ENCODE measurements at regions of chr20 and their contacts with region 1.

Region 1: GRCh38 chr20:2237059-2237458 is 58.7 kb upstream of the TGM3 start:
- DNase-seq: peak; percentile 97
- H3K4me3 ChIP-seq: no peak overlapping the region
- H3K27ac ChIP-seq: peak overlapping the region; percentile 49
- H3K4me1 ChIP-seq: peaks cover 14% of the 10 kb centered on the region
- H3K27me3 ChIP-seq: peaks cover 11% of the 10 kb centered on the region
- CTCF ChIP-seq: peak in 1 of 2 donors; percentile 65

Region 2: DNA sequence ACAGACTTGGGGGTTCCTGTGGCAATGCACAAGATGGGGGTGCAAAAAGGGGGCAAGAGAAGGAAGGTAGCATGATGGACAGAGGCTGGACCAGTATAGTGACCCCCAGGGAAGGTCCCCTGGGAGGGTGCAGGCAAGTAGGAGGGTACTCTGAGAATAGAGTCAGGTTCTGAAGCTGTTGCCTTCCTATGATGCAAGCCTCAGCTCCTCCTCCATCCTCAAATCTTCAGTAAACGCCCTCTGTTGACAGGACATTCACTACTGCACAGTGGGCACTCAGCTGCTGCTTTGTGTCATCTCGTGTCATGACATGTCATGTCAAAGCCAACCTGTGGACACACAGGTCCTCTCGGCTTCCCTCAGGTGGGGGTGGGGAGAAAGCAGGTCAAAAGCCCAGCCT is 902.3 kb before region 1 on chr20:
- CTCF ChIA-PET with region 1: interaction called, 20 read pairs
- dilution Hi-C with region 1: no loop called
- in situ Hi-C with region 1: no loop called
- intact Hi-C with region 1: no loop called
- DNase-seq: peak; percentile 50
- H3K4me3 ChIP-seq: no peak overlapping the region
- H3K27ac ChIP-seq: no peak overlapping the region
- H3K4me1 ChIP-seq: peaks cover 28% of the 10 kb centered on the region
- H3K27me3 ChIP-seq: no peaks in the 10 kb centered on the region
- CTCF ChIP-seq: peak in 1 of 2 donors; percentile 34

Region 3: GRCh38 chr20:2261629-2262028 is 24.6 kb after region 1 on chr20:
- CTCF ChIA-PET with region 1: interaction called, 18 read pairs
- dilution Hi-C with region 1: no loop called
- in situ Hi-C with region 1: no loop called
- intact Hi-C with region 1: no loop called
- DNase-seq: no peak
- H3K4me3 ChIP-seq: no peak overlapping the region
- H3K27ac ChIP-seq: no peak overlapping the region
- H3K4me1 ChIP-seq: no peaks in the 10 kb centered on the region
- H3K27me3 ChIP-seq: no peaks in the 10 kb centered on the region
- CTCF ChIP-seq: no peak

Region 4: GRCh38 chr20:2283706-2284423 is 46.8 kb after region 1 on chr20:
- CTCF ChIA-PET with region 1: no interaction called
- dilution Hi-C with region 1: no loop called
- in situ Hi-C with region 1: no loop called
- intact Hi-C with region 1: loop called (anchors 5 kb)
- DNase-seq: peak; percentile 77
- H3K4me3 ChIP-seq: no peak overlapping the region
- H3K27ac ChIP-seq: no peak overlapping the region
- H3K4me1 ChIP-seq: peaks cover 19% of the 10 kb centered on the region
- H3K27me3 ChIP-seq: peaks cover 2% of the 10 kb centered on the region
- CTCF ChIP-seq: no peak

Region 5: GRCh38 chr20:2822073-2822472 is 585.0 kb after region 1 on chr20:
- CTCF ChIA-PET with region 1: no interaction called
- dilution Hi-C with region 1: no loop called
- in situ Hi-C with region 1: no loop called
- intact Hi-C with region 1: no loop called
- DNase-seq: no peak
- H3K4me3 ChIP-seq: no peak overlapping the region
- H3K27ac ChIP-seq: no peak overlapping the region
- H3K4me1 ChIP-seq: no peaks in the 10 kb centered on the region
- H3K27me3 ChIP-seq: peaks cover 18% of the 10 kb centered on the region
- CTCF ChIP-seq: no peak

Measured in mammary epithelial cell (primary cell).